Kidney (tissue), 22 donors: ENCODE measurements at regions of chr2 and their contacts with region 1.

Region 1: GRCh38 chr2:158753641-158754611 is 41.2 kb upstream of the DAPL1 start:
- DNase-seq: peak in 4 of 5 donors; percentile 67 to 89 (median 78)
- H3K4me3 ChIP-seq: peak overlapping the region; percentile 48 to 62 (median 61)
- H3K27ac ChIP-seq: no peak overlapping the region
- H3K4me1 ChIP-seq: no peaks in the 10 kb centered on the region
- H3K27me3 ChIP-seq: no peaks in the 10 kb centered on the region
- CTCF ChIP-seq: peak; percentile 80

Region 2: DNA sequence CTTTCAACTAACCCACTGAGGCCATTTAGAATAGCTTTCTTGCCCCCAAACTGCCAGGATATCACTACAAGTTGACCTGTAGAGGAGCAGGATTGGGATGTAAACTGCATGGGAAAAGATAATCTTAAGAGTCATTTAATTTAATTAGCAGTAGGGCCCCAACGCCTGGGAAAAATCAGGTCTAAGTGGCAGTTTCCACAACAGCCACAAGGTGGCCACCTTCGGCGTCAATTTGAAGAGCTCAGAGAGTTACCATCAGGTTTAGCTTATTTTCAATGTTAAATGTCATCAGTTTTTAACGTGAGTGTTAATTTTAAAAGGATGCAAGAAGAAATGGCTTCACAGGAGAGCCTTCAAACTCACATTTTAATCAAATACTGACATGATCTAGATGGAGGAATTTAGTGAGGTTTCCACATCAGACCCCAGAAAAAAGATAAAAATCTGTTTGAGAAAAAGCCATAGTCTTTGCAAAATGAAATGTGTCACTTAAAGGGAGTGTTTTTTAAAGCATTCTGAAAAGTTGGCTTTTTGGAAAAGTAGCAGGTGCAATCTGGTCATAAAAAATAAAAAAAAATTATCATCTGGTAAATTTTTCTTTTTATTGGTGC is 729.5 kb before region 1 on chr2:
- intact Hi-C with region 1: loop called (anchors 10 kb)
- DNase-seq: peak in 4 of 5 donors; percentile 49 to 72 (median 60)
- H3K4me3 ChIP-seq: no peak overlapping the region
- H3K27ac ChIP-seq: no peak overlapping the region
- H3K4me1 ChIP-seq: peaks cover 0 to 2% (median 0%) of the 10 kb centered on the region in 3 donors
- H3K27me3 ChIP-seq: no peaks in the 10 kb centered on the region
- CTCF ChIP-seq: peak; percentile 73